Posterior cingulate gyrus (tissue), 11 donors: ENCODE measurements at regions of chr6 and their contacts with region 1.

Region 1: GRCh38 chr6:109187399-109188114 is 92.2 kb downstream of the CEP57L1 start:
- DNase-seq: peak in 9 of 10 donors; percentile 12 to 90 (median 62)

Region 2: DNA sequence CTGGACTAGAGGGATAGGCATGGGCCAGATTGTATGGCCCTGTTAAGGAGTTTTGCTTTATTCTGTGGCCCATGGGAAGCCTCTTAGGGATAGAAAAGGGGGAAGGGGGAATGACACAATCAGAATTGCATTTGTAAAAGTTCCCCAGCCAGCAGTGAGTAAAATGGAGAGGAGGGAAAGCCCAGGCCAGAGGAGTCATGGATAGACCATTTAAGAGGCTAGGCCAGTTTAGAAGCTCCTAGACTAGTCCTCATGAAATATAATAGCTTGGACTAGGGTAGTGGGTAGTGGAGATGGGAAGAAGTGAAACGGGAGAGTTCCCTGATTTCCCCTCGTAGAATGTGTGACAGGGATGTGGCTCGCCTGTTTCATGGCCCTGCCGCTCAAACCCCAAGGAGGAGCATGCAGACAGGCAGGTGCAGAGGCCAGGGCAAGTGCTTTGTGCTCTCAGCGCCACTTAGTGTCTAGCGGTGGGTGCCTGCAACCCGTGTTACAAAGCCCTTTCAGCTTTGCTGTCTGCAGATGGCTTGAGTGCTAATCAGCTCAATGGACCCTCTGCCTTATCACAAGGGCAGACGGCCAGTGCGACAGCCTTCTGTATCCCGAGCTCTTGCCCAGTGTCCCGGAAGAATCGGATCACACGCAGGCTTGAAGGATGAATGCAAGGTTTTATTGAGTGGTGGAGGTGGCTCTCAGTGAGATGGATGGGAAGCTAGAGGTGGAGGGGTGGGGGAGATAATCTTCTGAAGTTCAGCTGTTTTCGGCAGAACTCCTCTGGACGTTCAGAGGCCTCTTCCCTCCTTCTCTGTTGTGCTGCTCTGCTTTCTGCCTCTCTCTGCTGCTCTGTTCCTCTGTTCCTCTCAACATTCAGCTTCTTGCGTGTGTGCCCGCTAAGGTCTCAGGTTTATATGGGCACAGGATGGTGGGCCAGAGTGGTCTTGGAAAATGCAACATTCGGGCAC is 48.8 kb after region 1 on chr6:
- intact Hi-C with region 1: loop called (anchors 5 kb)
- DNase-seq: peak in 6 of 10 donors; percentile 12 to 90 (median 42)

Region 3: DNA sequence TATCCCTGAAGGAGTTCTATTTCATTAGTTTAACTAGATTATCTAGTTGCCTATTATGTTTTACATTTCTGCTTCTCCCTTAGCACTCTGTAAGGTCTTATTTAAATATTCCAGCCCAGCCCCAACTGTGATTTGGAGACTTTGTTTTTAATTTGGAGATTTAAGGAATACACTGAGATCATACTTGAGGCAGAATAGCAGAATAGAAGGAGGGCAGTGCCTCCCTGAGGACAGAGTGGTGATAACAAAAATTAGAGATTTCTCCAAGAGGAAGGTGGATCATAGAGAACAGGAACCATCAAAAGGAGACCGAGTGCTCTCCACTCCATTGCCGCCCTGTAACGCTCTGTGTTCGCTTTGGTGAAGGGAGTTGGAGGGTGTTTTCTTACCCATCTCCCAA is 209.5 kb after region 1 on chr6:
- intact Hi-C with region 1: loop called (anchors 5 kb)
- DNase-seq: no peak